Heart left ventricle (tissue), 16 donors: ENCODE measurements at regions of chrX and their contacts with region 1.

Region 1: GRCh38 chrX:18210470-18210869 is 10.2 kb downstream of the BEND2 start:
- DNase-seq: no peak
- ATAC-seq: no peak
- H3K4me3 ChIP-seq: no peak overlapping the region
- H3K27ac ChIP-seq: no peak overlapping the region
- H3K4me1 ChIP-seq: no peaks in the 10 kb centered on the region
- H3K27me3 ChIP-seq: peaks cover 0 to 5% (median 0%) of the 10 kb centered on the region in 9 donors
- CTCF ChIP-seq: peak in 8 of 12 donors; percentile 16 to 45 (median 38)
- POLR2A ChIP-seq: no peak

Region 2: GRCh38 chrX:17744896-17745523 is 465.5 kb before region 1 on chrX:
- intact Hi-C with region 1: loop called in 1 of 10 experiments (anchors 5 kb)
- DNase-seq: no peak
- ATAC-seq: no peak
- H3K4me3 ChIP-seq: no peak overlapping the region
- H3K27ac ChIP-seq: no peak overlapping the region
- H3K4me1 ChIP-seq: peaks cover 0 to 4% (median 0%) of the 10 kb centered on the region in 12 donors
- H3K27me3 ChIP-seq: peaks cover 0 to 11% (median 0%) of the 10 kb centered on the region in 9 donors
- CTCF ChIP-seq: peak in 11 of 12 donors; percentile 22 to 45 (median 34)
- POLR2A ChIP-seq: no peak

Region 3: DNA sequence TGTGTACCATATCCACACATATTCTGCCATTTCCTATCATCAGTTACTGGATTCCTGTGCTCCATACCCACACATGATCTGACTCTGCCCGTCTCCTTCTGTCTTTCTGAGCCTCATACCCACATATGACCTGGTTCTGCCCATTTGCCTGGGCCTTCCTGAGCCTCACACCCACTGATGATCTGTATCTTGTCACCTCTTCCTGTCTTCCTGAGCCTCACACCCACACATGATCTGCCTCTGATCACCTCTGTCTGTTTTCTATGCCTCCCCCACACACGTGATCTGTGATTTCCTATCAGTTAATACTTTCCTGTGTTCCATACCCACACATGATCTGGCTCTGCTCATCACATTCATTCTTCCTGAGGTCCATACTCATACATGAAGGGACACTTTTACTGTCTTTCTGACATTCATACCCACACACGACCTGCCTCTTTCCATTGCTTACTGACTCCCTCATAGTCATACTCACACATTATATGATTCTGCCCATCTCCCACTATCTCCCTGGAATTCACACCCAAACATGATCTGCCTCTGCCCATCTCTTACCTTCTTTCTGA is 440.7 kb before region 1 on chrX:
- intact Hi-C with region 1: loop called in 1 of 10 experiments (anchors 10 kb)
- DNase-seq: no peak
- ATAC-seq: no peak
- H3K4me3 ChIP-seq: no peak overlapping the region
- H3K27ac ChIP-seq: no peak overlapping the region
- H3K4me1 ChIP-seq: no peaks in the 10 kb centered on the region
- H3K27me3 ChIP-seq: peaks cover 0 to 23% (median 0%) of the 10 kb centered on the region in 9 donors
- CTCF ChIP-seq: no peak
- POLR2A ChIP-seq: no peak

Region 4: GRCh38 chrX:17788439-17788838 is 422.0 kb before region 1 on chrX:
- intact Hi-C with region 1: loop called in 4 of 10 experiments (anchors 2 to 5 kb)
- DNase-seq: peak in 3 of 5 donors; percentile 17 to 39 (median 38)
- ATAC-seq: peak in 3 of 4 donors; percentile 61 to 75 (median 71)
- H3K4me3 ChIP-seq: no peak overlapping the region
- H3K27ac ChIP-seq: no peak overlapping the region
- H3K4me1 ChIP-seq: peaks cover 0 to 4% (median 0%) of the 10 kb centered on the region in 12 donors
- H3K27me3 ChIP-seq: peaks cover 0 to 14% (median 0%) of the 10 kb centered on the region in 9 donors
- CTCF ChIP-seq: peak; percentile 65 to 83 (median 70)
- POLR2A ChIP-seq: no peak

Region 5: DNA sequence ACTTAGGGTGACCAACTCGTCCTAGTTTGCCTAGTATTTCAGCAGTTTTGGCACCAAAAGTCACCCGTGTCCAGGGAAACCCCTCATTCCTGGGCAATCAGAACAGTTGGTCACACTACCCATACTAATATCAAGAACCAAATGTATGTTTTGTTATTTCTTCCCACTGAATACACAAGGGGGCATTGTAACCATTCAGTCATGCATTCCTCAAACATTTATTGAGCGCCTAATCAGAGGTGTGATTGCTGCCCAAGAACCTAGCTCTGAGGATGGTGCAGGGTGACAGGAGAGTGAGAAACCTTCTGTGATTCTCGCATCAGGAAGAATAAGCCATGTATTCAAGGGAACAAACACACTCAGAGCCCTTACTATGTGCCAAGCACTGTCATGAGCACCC is 279.6 kb before region 1 on chrX:
- intact Hi-C with region 1: loop called in 1 of 10 experiments (anchors 10 kb)
- DNase-seq: no peak
- ATAC-seq: no peak
- H3K4me3 ChIP-seq: no peak overlapping the region
- H3K27ac ChIP-seq: no peak overlapping the region
- H3K4me1 ChIP-seq: no peaks in the 10 kb centered on the region
- H3K27me3 ChIP-seq: peaks cover 0 to 7% (median 0%) of the 10 kb centered on the region in 9 donors
- CTCF ChIP-seq: no peak
- POLR2A ChIP-seq: no peak